ENCODE measurements at regions of chr20 and their contacts with region 1.

Region 1: GRCh38 chr20:41411391-41411847 is 44.8 kb upstream of the EMILIN3 start:
- DNase-seq: no peak
- H3K4me3 ChIP-seq: no peak overlapping the region
- CTCF ChIP-seq: peak; percentile 19

Region 2: GRCh38 chr20:40931410-40932044 is 479.9 kb before region 1 on chr20:
- CTCF ChIA-PET with region 1: no interaction called
- POLR2A ChIA-PET with region 1: no interaction called
- DNase-seq: no peak
- H3K4me3 ChIP-seq: no peak overlapping the region
- CTCF ChIP-seq: no peak

Region 3: DNA sequence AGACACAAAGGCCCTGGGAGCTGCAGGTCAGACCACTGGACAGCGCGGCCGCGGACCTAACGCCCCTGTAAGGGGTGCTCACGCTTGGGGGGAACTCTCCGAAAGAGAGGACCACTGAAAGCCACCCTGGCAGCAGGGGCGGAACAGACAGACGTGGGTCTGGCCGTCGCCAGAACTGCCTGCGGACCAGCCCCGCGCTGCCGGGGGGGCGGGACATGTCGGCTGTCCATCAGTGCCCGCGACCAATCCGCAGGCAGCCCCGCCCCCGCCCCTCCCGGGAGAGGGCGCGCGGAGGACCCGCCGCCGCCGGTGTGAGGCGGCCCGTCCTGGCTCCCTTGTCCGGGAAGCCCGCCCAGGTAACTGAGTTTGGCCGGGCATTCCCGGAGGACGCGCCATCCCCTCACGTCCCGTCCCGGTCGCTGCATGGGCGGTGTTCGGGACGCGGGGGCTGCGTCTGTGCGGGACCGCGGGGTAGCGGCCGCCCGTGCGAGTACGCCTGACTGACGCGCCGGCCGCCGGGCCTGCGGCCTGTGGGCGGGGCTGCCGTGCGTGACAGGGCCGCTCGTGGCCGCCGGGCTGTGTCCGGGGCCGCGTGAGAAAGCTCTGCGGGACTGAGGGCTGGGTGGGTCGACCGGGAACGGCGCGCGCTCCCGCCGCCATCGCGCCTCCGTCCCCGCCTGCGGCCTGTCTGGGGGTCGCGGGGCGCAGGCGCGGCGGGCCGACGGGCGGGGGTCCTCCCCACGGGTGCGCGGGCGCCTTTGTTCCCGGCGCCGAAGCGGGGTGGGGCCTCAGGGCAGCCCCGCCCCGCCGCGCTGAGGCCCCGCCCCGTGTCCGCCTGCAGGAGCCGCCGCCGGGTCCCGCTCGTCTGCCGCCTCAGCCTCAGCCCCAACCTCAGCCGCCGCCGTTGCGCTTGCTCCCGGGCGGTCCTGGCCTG is 274.5 kb before region 1 on chr20 and contains the start of gene PLCG1:
- CTCF ChIA-PET with region 1: interaction called, 18 read pairs
- POLR2A ChIA-PET with region 1: no interaction called
- DNase-seq: peak; percentile 9
- H3K4me3 ChIP-seq: peak within 1 kb of the TSS; percentile 75
- CTCF ChIP-seq: no peak

Region 4: DNA sequence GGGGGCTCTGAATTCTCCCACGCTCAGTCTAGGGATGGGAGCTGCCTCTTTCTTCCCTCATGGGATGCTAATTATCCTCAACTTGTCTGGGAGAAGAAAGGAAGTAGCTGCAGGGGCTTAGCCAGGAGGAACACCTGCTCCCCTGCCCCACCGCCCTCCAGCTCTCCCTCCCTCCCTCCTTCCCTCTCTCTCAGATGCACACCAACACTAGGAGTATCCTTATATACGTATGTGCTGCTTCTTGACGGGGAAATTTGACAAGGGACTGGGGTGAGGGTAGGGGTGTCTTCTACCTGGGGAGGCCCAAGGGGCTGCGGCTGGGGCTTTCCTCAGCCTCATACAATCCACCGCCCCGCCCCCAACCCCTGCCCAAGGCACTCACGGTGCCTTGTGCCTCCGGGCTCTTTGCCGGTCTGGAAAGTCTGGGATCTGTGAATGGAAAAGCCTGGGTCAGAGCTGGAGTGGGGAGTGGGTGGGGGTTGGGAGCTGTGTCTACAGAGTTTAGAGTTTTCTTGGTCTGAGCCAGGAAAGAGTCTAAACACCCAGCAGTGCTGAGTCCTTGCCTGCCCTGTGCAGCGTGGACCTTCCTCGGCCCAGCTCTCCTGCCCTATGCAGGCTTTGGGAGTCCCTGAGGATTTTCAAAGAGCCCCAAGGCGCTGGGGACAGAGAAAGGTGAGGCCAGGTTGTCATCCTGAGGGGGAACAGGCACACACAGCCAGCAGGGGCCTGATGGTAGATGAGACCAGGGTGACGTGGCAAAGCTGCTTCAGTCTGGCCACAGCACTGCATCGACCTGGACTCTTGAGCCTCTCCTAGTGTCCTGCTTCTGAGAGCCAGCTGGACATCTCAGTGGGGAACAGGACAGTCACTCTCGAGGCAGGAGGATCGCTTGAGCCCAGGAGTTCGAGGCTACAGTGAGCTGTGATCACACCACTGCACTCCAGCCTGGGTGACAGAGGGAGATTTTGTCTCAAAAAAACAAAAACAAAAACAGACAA is 15.5 kb before region 1 on chr20:
- CTCF ChIA-PET with region 1: interaction called, 50 read pairs
- POLR2A ChIA-PET with region 1: no interaction called
- DNase-seq: no peak
- H3K4me3 ChIP-seq: no peak overlapping the region
- CTCF ChIP-seq: no peak

Region 5: DNA sequence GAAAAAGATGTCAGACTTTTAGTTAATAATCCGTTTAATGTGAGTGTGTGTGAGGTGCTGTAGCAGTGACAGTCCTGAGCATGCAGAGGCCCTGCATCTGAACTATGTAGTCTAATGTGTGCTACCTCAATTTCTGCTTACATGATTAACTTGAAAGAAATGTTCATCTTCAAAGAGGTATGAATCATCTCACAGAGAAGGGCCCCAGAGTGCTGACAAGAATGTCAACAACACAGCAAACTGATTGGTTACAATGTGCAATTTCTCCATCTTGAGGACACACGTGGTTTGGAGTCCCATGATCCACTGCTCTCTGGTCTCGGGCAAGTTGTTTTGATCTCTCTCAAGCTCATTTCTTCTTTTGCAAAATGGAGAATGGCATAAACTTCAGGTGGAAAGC is 16.9 kb after region 1 on chr20:
- CTCF ChIA-PET with region 1: interaction called, 172 read pairs
- POLR2A ChIA-PET with region 1: no interaction called
- DNase-seq: no peak
- H3K4me3 ChIP-seq: no peak overlapping the region
- CTCF ChIP-seq: no peak

Measured in AG04449 (cell line).